ENCODE measurements at regions of chr6 and their contacts with region 1.

Region 1: GRCh38 chr6:130322673-130323268 is 43.0 kb upstream of the TMEM200A start:
- DNase-seq: no peak
- H3K4me3 ChIP-seq: no peak overlapping the region
- H3K27ac ChIP-seq: no peak overlapping the region
- H3K4me1 ChIP-seq: no peaks in the 10 kb centered on the region
- H3K27me3 ChIP-seq: no peaks in the 10 kb centered on the region
- CTCF ChIP-seq: peak in 2 of 3 experiments; percentile 70 to 82; a peak in 3 of 4 replicates
- EP300 ChIP-seq: no peak
- POLR2A ChIP-seq: no peak
- RAD21 ChIP-seq: peak; percentile 90 to 92

Region 2: DNA sequence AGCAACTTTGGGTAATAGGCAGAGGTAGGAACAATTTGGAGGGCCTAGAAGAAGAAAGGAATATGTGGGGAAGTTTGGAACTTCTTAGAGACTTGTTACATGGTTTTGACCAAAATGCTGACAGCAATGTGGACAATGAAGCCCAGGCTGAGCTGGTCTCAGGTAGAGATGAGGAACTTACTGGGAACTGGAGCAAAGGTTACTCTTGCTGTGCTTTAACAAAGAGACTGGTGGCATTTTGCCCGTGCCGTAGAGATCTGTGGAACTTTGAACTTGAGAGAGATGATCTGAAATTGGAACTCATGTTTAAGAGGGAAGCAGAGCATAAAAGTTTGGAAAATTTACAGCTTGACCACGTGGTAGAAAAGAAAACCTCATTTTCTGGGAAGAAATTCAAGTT is 14.8 kb after region 1 on chr6:
- CTCF ChIA-PET with region 1: interaction called, 14 read pairs
- POLR2A ChIA-PET with region 1: no interaction called
- DNase-seq: no peak
- H3K4me3 ChIP-seq: no peak overlapping the region
- H3K27ac ChIP-seq: no peak overlapping the region
- H3K4me1 ChIP-seq: no peaks in the 10 kb centered on the region; a peak in 1 of 7 replicates
- H3K27me3 ChIP-seq: no peaks in the 10 kb centered on the region
- CTCF ChIP-seq: no peak
- EP300 ChIP-seq: no peak
- POLR2A ChIP-seq: no peak
- RAD21 ChIP-seq: no peak

Region 3: DNA sequence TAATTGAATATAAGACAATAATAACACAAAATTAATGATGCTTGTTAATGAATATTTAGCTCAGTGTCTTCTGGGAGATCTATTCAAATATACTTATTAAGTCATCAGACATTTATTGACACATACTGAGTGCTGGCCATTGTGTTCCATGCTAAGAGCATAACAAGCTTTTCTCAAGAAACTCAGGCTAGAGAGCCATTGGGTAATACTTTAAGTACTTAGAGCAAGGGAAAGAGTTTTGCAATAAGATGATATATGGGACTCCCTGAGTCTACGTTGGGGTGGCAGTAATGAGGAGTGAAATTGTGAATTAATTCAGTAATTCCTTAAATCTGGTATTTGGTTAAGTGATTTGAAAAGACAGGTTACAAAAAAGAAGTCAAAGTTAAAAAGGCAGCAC is 54.2 kb after region 1 on chr6:
- CTCF ChIA-PET with region 1: no interaction called
- POLR2A ChIA-PET with region 1: no interaction called
- DNase-seq: no peak
- H3K4me3 ChIP-seq: no peak overlapping the region
- H3K27ac ChIP-seq: no peak overlapping the region
- H3K4me1 ChIP-seq: peaks cover 0 to 16% (median 3%) of the 10 kb centered on the region in 4 experiments; a peak in 3 of 7 replicates
- H3K27me3 ChIP-seq: no peaks in the 10 kb centered on the region
- CTCF ChIP-seq: no peak
- EP300 ChIP-seq: no peak
- POLR2A ChIP-seq: no peak
- RAD21 ChIP-seq: no peak

Measured in H1 (cell line).